H1 (cell line): ENCODE measurements at regions of chr1 and their contacts with region 1.

Region 1: GRCh38 chr1:52056163-52056936 is at the start of gene BTF3L4:
- DNase-seq: peak; percentile 73 to 95
- H3K4me3 ChIP-seq: peak within 1 kb of the TSS; percentile 87 to 98 (median 92)
- H3K27ac ChIP-seq: peak within 1 kb of the TSS; percentile 93
- H3K4me1 ChIP-seq: peaks cover 0 to 7% (median 2%) of the 10 kb centered on the region in 4 experiments; a peak in 3 of 7 replicates
- H3K27me3 ChIP-seq: no peaks in the 10 kb centered on the region
- CTCF ChIP-seq: peak in 1 of 3 experiments; percentile 2; a peak in 1 of 4 replicates
- EP300 ChIP-seq: no peak
- POLR2A ChIP-seq: peak; percentile 67 to 88
- RAD21 ChIP-seq: no peak
- total RNA-seq, gene BTF3L4: 97.3 and 98.3 TPM in 2 replicates

Region 2: GRCh38 chr1:52007215-52008002 is 48.9 kb before region 1 on chr1:
- CTCF ChIA-PET with region 1: no interaction called
- POLR2A ChIA-PET with region 1: interaction called, 14 read pairs
- DNase-seq: no peak
- H3K4me3 ChIP-seq: no peak overlapping the region; a peak in 1 of 8 replicates
- H3K27ac ChIP-seq: peak overlapping the region; percentile 11; the same call in 1 of the 2 replicates
- H3K4me1 ChIP-seq: peaks cover 5 to 14% (median 12%) of the 10 kb centered on the region in 4 experiments; a peak in 6 of 7 replicates
- H3K27me3 ChIP-seq: no peaks in the 10 kb centered on the region
- CTCF ChIP-seq: no peak
- EP300 ChIP-seq: no peak
- POLR2A ChIP-seq: no peak
- RAD21 ChIP-seq: no peak

Region 3: DNA sequence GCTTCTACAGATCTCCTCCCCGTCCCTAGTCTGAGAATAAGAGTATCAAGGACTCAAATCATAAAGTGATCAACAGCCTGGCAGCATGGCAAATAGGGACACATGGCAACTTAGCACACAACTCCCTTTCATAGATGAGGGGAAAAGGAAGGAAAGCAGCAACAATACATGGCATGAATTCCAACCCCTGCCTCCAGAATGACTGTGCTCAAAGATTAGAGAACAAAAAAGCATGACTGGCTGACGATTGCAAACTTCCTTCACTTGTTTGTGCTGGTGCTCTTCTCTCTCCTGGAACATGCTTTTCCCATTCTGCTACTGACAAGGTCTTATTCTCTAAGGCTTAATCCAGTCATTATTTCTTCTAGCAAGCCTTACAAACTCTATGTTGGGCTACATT is 34.2 kb before region 1 on chr1:
- CTCF ChIA-PET with region 1: no interaction called
- POLR2A ChIA-PET with region 1: no interaction called
- DNase-seq: no peak
- H3K4me3 ChIP-seq: no peak overlapping the region
- H3K27ac ChIP-seq: no peak overlapping the region
- H3K4me1 ChIP-seq: no peaks in the 10 kb centered on the region
- H3K27me3 ChIP-seq: no peaks in the 10 kb centered on the region
- CTCF ChIP-seq: no peak
- EP300 ChIP-seq: no peak
- POLR2A ChIP-seq: no peak
- RAD21 ChIP-seq: no peak

Region 4: GRCh38 chr1:52033190-52034049 is 22.9 kb before region 1 on chr1 and contains the start of gene KTI12:
- CTCF ChIA-PET with region 1: no interaction called
- POLR2A ChIA-PET with region 1: interaction called, 54 read pairs
- DNase-seq: peak; percentile 70 to 77
- H3K4me3 ChIP-seq: peak within 1 kb of the TSS; percentile 68 to 94 (median 81)
- H3K27ac ChIP-seq: peak within 1 kb of the TSS; percentile 49
- H3K4me1 ChIP-seq: peaks cover 2 to 4% (median 2%) of the 10 kb centered on the region in 4 experiments; a peak in 4 of 7 replicates
- H3K27me3 ChIP-seq: no peaks in the 10 kb centered on the region
- CTCF ChIP-seq: no peak
- EP300 ChIP-seq: no peak
- POLR2A ChIP-seq: peak; percentile 59 to 89
- RAD21 ChIP-seq: no peak
- total RNA-seq, gene KTI12: 7.5 and 8.3 TPM in 2 replicates

Region 5: GRCh38 chr1:52041551-52042185 is 14.7 kb before region 1 on chr1:
- CTCF ChIA-PET with region 1: interaction called, 5 read pairs
- POLR2A ChIA-PET with region 1: interaction called, 61 read pairs
- DNase-seq: no peak
- H3K4me3 ChIP-seq: no peak overlapping the region
- H3K27ac ChIP-seq: no peak overlapping the region
- H3K4me1 ChIP-seq: no peaks in the 10 kb centered on the region
- H3K27me3 ChIP-seq: no peaks in the 10 kb centered on the region
- CTCF ChIP-seq: no peak
- EP300 ChIP-seq: no peak
- POLR2A ChIP-seq: no peak
- RAD21 ChIP-seq: no peak

Region 6: GRCh38 chr1:52072291-52072690 is 15.9 kb after region 1 on chr1:
- CTCF ChIA-PET with region 1: interaction called, 3 read pairs
- POLR2A ChIA-PET with region 1: interaction called, 22 read pairs
- DNase-seq: no peak
- H3K4me3 ChIP-seq: no peak overlapping the region
- H3K27ac ChIP-seq: no peak overlapping the region
- H3K4me1 ChIP-seq: no peaks in the 10 kb centered on the region
- H3K27me3 ChIP-seq: no peaks in the 10 kb centered on the region
- CTCF ChIP-seq: no peak
- EP300 ChIP-seq: no peak
- POLR2A ChIP-seq: no peak
- RAD21 ChIP-seq: no peak

Region 7: DNA sequence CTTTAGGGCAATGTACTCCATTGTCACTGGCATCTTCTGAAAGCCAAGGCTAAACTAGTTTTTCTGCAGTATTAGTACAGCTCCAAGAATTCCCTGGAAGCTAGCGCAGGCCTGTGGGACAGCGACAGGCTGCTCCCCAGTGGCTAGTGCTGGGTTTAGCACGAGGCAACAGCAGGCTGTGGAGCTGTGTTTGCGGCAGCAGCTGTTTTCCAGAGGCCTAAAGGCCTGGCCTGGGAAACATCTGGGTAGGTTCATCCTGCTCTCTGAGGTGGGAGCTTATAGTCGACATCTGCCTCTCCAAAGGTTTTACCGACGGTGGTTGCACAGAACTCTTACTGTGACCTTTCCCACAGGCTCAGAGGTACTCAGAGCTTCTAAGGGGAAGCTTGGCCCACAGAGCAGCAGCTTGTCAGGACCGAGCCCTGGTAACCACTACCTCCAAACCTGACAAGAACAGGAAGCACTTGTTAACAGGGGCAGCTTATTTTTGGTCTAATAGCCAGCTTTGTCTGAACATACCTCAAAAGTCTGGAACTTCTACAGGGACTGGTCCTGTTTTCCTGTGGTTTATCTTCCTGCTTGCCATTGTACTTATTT is 292.5 kb after region 1 on chr1:
- CTCF ChIA-PET with region 1: interaction called, 3 read pairs
- POLR2A ChIA-PET with region 1: interaction called, 10 read pairs
- DNase-seq: peak; percentile 51 to 63
- H3K4me3 ChIP-seq: no peak overlapping the region
- H3K27ac ChIP-seq: no peak overlapping the region
- H3K4me1 ChIP-seq: peaks cover 1 to 12% (median 4%) of the 10 kb centered on the region in 4 experiments; a peak in 5 of 7 replicates
- H3K27me3 ChIP-seq: no peaks in the 10 kb centered on the region
- CTCF ChIP-seq: peak; percentile 71 to 84 (median 78)
- EP300 ChIP-seq: no peak
- POLR2A ChIP-seq: no peak
- RAD21 ChIP-seq: peak; percentile 90 to 94

Region 8: DNA sequence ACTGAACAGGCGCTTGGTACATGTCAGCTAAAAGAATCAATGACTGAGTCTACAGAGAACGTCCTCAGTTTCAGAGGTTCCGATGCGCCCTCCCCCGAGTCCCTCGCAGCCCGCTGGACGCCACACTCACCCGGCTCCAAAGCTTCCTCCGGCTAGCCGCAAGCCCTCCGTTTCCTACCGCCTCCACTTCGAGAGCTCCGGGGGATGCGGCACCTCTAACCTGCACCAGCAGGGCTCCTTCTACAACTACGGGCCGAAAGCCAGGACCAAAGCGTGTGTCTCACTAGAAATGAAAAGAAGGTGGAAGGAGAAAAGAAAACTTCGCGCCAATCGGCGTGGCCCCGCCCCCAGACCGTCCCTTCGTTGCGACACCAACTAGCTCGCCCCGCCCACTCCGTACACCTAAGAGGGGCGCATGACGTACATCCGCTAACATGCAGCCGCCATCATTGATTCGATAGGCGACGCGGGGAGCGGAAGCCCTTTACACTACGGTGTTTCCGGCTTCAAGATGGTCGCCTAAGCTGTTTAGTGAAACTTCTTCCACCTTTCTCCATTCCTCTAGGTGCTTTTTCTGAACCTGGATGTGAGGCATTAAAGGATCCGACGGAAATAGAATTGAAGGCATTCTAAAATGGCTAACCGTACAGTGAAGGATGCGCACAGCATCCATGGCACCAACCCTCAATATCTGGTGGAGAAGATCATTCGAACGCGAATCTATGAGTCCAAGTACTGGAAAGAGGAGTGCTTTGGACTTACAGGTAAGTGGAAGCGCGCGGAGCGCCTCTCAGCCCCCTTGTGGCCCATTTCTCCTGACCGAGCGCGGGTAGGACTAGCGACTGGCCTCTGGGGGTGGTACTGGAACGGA is 348.0 kb after region 1 on chr1 and contains the starts of genes ORC1 and PRPF38A:
- CTCF ChIA-PET with region 1: no interaction called
- POLR2A ChIA-PET with region 1: interaction called, 24 read pairs
- DNase-seq: peak; percentile 92 to 98
- H3K4me3 ChIP-seq: peak within 1 kb of the TSS; percentile 89 to 94 (median 91)
- H3K27ac ChIP-seq: peak within 1 kb of the TSS; percentile 97
- H3K4me1 ChIP-seq: peaks cover 0 to 7% (median 0%) of the 10 kb centered on the region in 4 experiments; a peak in 1 of 7 replicates
- H3K27me3 ChIP-seq: no peaks in the 10 kb centered on the region
- CTCF ChIP-seq: peak; percentile 53 to 87 (median 60)
- EP300 ChIP-seq: no peak
- POLR2A ChIP-seq: peak; percentile 94 to 97
- RAD21 ChIP-seq: peak; percentile 32 to 39; a peak in 3 of 4 replicates
- total RNA-seq, gene ORC1: 49.0 and 49.7 TPM in 2 replicates
- total RNA-seq, gene PRPF38A: 70.6 and 76.2 TPM in 2 replicates